AG04449 (cell line): ENCODE measurements at regions of chr22 and their contacts with region 1.

Region 1: GRCh38 chr22:39490135-39490798 is 11.8 kb upstream of the MIEF1 start:
- DNase-seq: no peak
- H3K4me3 ChIP-seq: no peak overlapping the region
- CTCF ChIP-seq: no peak

Region 2: DNA sequence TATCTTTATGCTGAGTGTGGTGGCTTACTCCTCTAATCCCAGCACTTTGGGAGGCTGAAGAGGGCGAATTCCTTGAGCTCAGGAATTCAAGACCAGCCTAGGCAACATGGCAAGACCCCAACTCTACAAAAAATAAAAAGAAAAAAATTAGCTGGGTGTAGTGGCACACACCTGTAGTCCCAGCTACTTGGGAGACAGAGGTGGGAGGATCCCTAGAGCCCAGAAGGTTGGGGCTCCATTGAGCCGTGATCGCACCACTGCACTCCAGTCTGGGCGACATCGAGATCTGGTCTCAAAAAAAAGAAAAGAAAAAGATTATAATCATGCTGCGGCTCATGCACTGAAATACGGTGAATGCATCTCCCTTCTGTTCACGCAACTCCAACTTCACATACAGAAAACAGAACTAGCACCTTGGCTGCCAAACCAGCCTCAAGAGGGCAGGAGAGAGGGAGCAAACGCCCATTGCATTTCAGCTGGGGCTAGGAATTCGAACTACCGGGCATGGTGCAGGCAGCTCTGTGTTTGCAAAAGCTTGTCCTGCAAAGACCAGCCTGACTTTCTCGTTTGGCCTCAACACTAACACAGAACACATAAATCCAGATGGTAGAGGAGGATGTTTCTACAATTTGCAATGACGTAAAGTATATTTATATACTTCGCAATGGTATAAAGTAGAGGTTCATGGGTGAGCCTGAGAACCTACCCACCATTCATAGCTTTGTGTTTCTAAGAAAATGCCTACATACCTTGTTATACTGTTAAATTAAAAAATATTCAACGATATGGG is 146.8 kb before region 1 on chr22:
- CTCF ChIA-PET with region 1: interaction called, 10 read pairs
- POLR2A ChIA-PET with region 1: no interaction called
- DNase-seq: no peak
- H3K4me3 ChIP-seq: no peak overlapping the region
- CTCF ChIP-seq: peak; percentile 88

Region 3: DNA sequence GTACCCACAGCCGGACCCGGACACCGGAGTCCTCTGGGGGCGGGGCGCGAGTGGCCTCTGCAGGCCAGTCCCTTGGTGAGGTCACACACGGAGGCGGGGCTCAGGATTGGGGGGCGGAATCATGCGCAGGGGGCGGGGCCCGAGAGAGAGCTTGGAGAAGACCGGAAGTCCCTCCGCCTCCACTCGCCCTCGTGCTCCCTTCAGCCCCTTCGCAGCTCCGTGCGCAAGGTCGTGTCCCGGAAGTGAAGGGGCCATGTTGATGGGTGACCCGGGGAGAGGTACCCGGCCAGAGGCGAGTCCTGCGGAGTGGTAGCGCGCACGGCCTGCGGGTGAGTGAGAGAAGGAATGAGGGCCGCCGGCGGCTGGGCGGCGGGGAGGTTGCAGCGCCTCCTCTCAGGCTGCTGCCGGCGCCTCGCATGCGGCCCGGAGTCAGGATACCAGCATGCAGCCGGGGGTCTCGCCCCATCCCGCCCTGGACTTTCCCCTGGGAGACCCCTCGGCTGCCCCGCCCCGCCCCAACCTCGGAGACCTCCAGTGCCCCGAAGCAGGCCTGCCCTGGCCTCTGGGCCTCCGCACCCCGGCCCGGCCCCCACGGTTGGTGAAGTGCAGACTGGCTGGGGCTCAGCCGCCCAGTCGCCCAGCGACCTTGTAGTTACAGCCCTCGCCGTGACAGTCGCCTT is 12.0 kb after region 1 on chr22 and contains the start of gene MIEF1:
- CTCF ChIA-PET with region 1: interaction called, 132 read pairs
- POLR2A ChIA-PET with region 1: no interaction called
- DNase-seq: peak; percentile 63
- H3K4me3 ChIP-seq: peak within 1 kb of the TSS; percentile 75
- CTCF ChIP-seq: peak; percentile 18

Region 4: DNA sequence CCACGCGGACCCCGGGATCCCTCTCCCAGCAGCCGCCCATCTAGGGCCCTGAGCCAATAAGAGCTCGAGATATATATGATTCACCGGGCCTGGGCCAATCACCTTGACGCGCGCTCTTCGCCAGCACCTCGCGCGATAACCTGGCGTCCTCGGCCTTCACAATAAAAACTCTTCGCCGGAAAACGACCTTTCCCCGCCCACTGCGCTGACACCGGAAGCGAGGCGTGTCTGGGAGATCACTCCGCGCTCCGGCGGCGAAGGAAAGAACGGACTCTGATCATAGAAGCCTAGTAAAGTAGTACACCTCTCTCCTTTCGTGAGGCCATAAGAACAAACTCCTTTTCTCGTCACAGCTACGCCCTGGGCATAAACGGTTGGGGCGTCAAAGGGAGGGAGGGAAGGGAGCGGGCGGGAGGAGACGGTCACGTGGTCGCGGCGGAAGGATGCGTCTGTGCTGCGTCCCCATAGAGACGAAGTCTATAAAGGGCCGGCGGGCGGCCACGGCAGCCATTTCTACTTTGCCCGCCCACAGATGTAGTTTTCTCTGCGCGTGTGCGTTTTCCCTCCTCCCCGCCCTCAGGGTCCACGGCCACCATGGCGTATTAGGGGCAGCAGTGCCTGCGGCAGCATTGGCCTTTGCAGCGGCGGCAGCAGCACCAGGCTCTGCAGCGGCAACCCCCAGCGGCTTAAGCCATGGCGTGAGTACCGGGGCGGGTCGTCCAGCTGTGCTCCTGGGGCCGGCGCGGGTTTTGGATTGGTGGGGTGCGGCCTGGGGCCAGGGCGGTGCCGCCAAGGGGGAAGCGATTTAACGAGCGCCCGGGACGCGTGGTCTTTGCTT is 30.0 kb after region 1 on chr22 and contains the start of gene ATF4:
- CTCF ChIA-PET with region 1: interaction called, 222 read pairs
- POLR2A ChIA-PET with region 1: interaction called, 15 read pairs
- DNase-seq: peak; percentile 98
- H3K4me3 ChIP-seq: peak within 1 kb of the TSS; percentile 94
- CTCF ChIP-seq: no peak

Region 5: GRCh38 chr22:39574779-39575551 is 84.7 kb after region 1 on chr22:
- CTCF ChIA-PET with region 1: no interaction called
- POLR2A ChIA-PET with region 1: no interaction called
- DNase-seq: peak; percentile 23
- H3K4me3 ChIP-seq: no peak overlapping the region
- CTCF ChIP-seq: no peak

Region 6: DNA sequence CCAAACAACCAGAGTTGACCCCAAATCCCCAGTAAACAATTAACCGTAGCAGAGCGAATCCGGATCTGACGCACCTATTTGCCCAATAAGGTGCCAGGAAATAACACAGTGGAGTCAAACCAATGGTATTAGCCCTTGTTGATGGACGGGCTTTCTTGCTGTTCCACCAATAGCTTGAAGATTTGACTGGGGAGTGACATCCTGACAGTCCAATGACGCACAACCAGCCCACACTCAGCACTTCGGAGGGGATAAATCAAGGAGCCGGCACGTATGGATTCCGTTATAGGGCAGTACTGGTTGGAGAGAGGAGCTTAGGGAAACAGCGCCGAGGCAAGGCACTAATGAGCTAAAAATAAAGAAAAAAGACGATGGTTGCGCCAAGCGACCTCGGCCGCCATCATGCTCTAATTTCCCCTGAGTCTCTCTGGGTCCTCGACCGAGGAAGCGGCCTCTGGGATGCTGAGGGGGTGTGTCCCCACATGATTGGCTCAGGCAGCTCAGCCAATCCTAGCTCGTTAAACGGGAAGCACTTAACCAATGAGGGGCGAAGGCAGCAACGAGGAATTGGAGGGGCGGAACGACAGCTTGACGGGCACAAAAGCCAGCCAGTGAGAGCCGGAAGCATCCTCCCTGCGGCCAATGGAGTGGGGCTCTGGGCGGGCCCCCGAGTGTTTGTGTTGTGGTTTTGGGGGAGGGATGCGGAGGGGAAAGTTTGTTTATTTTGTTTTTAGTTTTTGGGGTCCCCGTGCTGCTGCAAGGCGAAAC is 554.0 kb after region 1 on chr22:
- CTCF ChIA-PET with region 1: interaction called, 10 read pairs
- POLR2A ChIA-PET with region 1: no interaction called
- DNase-seq: peak; percentile 96
- H3K4me3 ChIP-seq: peak overlapping the region; percentile 95
- CTCF ChIP-seq: no peak